ENCODE measurements at regions of chr4 and their contacts with region 1.

Region 1: GRCh38 chr4:125849869-125850268 is 535.1 kb downstream of the FAT4 start:
- DNase-seq: no peak
- ATAC-seq: no peak
- H3K4me3 ChIP-seq: no peak overlapping the region
- H3K27ac ChIP-seq: no peak overlapping the region
- H3K4me1 ChIP-seq: no peaks in the 10 kb centered on the region
- H3K27me3 ChIP-seq: no peaks in the 10 kb centered on the region
- CTCF ChIP-seq: no peak
- POLR2A ChIP-seq: no peak

Region 2: DNA sequence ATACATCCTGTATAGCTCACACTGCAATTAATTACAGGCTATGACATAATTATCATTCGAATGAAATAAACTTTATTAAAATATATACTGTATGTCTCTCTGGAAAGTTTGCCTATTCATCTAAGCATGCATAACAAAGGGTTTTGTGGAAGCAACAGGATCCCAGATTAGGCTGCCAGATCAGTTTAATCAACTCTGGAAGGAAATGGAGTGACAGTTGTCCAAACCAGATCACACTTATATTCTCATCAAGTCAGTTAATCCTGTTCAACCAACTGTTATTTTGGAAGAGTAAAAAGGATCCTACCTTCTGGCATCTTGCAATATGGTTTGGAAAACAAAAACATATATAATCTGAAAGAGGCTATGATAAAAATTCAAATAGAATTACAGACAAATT is 222.9 kb before region 1 on chr4:
- intact Hi-C with region 1: no loop called
- DNase-seq: no peak
- ATAC-seq: no peak
- H3K4me3 ChIP-seq: no peak overlapping the region
- H3K27ac ChIP-seq: no peak overlapping the region
- H3K4me1 ChIP-seq: peaks cover 0 to 2% (median 0%) of the 10 kb centered on the region in 12 donors
- H3K27me3 ChIP-seq: no peaks in the 10 kb centered on the region
- CTCF ChIP-seq: no peak
- POLR2A ChIP-seq: no peak

Region 3: DNA sequence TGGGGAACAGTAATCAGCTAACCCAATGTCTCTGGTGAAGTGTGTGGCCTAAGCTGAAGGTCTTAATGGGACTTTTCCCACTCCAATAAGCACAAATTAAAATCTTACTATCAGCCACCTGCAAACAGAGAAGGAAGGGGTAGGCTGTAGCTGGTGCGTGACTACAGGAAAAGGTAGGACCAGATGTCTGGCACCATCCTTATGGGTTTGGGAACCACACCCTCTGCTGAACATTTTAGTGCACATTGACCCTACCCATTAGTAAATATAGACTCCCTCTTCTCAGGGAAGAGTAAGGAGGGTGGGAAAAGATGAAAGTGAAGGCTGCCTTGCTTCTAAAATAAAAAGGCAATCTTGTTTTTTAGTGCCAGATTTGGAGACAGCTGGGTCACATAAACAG is 67.7 kb after region 1 on chr4:
- intact Hi-C with region 1: no loop called
- DNase-seq: no peak
- ATAC-seq: no peak
- H3K4me3 ChIP-seq: no peak overlapping the region
- H3K27ac ChIP-seq: no peak overlapping the region
- H3K4me1 ChIP-seq: no peaks in the 10 kb centered on the region
- H3K27me3 ChIP-seq: no peaks in the 10 kb centered on the region
- CTCF ChIP-seq: no peak
- POLR2A ChIP-seq: no peak

Region 4: GRCh38 chr4:126495163-126495752 is 645.4 kb after region 1 on chr4:
- intact Hi-C with region 1: loop called in 1 of 10 experiments (anchors 5 kb)
- DNase-seq: no peak
- ATAC-seq: no peak
- H3K4me3 ChIP-seq: no peak overlapping the region
- H3K27ac ChIP-seq: no peak overlapping the region
- H3K4me1 ChIP-seq: no peaks in the 10 kb centered on the region
- H3K27me3 ChIP-seq: no peaks in the 10 kb centered on the region
- CTCF ChIP-seq: no peak
- POLR2A ChIP-seq: no peak